ENCODE measurements at regions of chr10 and their contacts with region 1.

Region 1: DNA sequence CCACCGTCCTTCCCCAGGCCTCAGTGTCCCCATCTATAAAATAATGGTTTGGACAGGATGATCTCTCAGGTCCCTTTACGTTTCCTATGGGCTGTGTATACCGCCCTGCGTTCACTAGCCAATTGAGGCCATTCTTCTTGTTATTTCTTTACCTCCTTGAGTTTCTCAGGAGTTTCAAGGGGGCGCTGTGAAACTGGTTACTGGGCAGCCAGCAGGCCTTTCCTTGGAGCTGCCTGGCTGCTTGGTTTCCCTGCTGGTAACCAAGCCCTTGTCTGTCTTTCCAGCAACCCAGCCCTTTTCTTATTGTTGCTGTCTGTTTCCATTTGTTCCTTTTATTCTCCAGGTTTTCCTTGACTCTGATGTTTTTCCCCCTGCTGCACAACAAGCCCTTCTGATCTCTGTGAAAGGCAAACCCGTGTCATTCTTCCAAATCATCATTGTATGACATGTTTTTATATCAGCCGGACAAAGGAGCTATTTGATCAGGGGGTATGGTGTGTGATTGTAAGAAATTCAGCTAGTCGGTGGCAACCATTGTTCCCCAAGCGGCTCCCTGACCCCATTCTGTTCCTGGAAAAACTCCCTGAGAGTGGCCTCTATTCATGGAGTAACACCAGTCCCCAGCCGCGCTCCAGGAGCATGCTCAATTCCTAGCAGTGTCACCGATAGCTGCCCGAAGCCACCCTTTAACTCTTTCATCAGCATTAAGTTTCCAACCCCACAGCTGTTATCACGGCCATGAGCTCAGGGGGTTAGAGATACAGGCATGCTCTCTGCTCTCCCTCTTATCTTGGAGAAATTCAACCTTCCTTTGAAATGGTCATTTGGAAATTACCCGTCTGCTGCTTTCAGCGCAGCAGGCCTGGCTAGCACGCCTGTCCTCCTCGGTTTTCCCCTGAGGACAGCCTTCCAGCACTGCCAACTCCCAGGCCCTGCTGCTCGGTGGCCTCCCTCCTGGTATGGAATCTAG is 26.6 kb downstream of the FGF8 start:
- DNase-seq: no peak
- H3K4me3 ChIP-seq: no peak overlapping the region
- H3K27ac ChIP-seq: no peak overlapping the region
- H3K4me1 ChIP-seq: no peaks in the 10 kb centered on the region
- H3K27me3 ChIP-seq: peaks cover 12% of the 10 kb centered on the region; the same call in 1 of the 2 replicates

Region 2: GRCh38 chr10:101189541-101190401 is 559.6 kb before region 1 on chr10:
- in situ Hi-C with region 1: loop called (anchors 25 kb)
- DNase-seq: no peak
- H3K4me3 ChIP-seq: no peak overlapping the region
- H3K27ac ChIP-seq: no peak overlapping the region
- H3K4me1 ChIP-seq: no peaks in the 10 kb centered on the region
- H3K27me3 ChIP-seq: peaks cover 22% of the 10 kb centered on the region; the same call in 1 of the 2 replicates

Region 3: DNA sequence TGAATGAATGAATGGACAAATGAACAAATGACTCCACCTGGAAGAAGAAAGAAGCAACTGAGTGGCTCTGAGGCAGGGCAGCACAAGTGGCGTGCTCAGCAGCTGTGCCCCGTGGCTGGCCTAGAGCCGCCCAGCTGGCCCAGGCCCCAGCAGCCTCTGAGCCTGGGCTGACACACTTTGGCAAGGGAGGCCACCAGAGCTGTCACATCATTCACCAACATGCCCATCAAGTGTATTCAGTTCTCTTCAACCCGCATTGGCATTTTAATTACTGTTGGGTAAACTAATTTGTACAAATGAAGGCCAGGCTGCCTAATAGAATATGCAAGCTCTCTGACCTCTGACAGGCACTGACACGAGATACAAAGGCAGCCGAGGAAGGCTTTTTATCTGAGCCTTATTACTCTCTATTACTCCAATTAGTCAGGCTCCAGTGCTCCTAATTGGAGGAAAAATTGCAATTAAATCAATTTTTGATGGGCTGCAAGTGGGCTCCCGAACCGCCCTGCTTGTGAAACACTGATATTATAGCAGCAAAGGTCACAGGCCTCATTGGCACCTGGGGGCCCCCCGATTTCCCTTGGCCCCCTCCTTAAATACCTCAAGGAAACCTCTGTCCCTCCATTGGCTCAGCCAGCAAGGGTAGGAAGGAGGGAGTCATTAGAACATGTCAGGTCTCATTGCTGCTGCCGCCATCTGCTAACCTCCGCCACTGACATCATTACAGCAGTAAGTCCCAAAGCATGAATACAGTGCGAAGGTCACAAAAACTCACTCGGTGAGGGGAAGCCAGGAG is 119.3 kb before region 1 on chr10:
- in situ Hi-C with region 1: no loop called
- DNase-seq: no peak
- H3K4me3 ChIP-seq: no peak overlapping the region
- H3K27ac ChIP-seq: no peak overlapping the region
- H3K4me1 ChIP-seq: no peaks in the 10 kb centered on the region
- H3K27me3 ChIP-seq: no peaks in the 10 kb centered on the region

Measured in GM23248 (cell line).